Ascending aorta (tissue), 2 donors: ENCODE measurements at regions of chr5 and their contacts with region 1.

Region 1: DNA sequence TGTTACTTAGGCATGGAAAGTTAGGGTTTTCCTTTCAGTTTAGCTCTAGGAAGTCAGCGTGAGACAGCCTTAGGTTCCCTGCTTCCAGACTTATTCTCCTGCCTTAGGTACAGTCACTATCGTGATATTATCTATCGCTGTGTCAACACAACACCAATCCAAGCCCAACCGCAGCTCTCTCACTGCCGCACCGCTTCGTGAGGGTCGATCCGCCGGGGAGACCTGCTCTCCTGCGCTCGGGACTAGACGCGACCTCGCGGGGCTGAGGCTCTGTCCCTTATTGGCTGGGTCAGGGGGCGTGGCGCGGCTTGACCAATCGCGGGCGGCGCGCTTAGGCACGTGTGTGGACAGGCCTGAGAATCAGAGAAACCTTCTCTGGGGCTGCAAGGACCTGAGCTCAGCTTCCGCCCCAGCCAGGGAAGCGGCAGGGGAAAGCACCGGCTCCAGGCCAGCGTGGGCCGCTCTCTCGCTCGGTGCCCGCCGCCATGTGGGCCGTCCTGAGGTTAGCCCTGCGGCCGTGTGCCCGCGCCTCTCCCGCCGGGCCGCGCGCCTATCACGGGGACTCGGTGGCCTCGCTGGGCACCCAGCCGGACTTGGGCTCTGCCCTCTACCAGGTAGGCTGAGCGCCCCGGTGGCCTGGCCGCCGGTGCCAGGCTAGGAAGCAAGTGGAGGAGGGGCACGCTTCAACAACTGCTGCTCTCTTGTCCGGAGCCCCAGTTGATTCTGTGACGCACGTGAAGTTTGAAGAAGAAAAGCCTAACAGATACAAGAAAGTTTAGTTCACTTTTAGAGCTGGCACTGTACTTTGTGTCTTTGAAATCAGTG is at the start of gene MCCC2:
- DNase-seq: peak; percentile 91 to 99
- H3K4me3 ChIP-seq: peak within 1 kb of the TSS; percentile 81 to 84
- H3K27ac ChIP-seq: peak within 1 kb of the TSS; percentile 89 to 92
- H3K4me1 ChIP-seq: peaks cover 0 to 13% of the 10 kb centered on the region in 2 donors
- H3K27me3 ChIP-seq: no peaks in the 10 kb centered on the region
- CTCF ChIP-seq: no peak
- total RNA-seq, gene MCCC2: 13.8 TPM

Region 2: GRCh38 chr5:71455427-71456361 is 131.5 kb before region 1 on chr5 and contains the start of gene BDP1:
- intact Hi-C with region 1: loop called (anchors 2 kb)
- DNase-seq: peak; percentile 87 to 98
- H3K4me3 ChIP-seq: peak within 1 kb of the TSS; percentile 79 to 85
- H3K27ac ChIP-seq: peak within 1 kb of the TSS; percentile 90 to 92
- H3K4me1 ChIP-seq: peaks cover 0 to 9% of the 10 kb centered on the region in 2 donors
- H3K27me3 ChIP-seq: no peaks in the 10 kb centered on the region
- CTCF ChIP-seq: peak in 1 of 3 experiments; percentile 30
- total RNA-seq, gene BDP1: 25.0 TPM

Region 3: GRCh38 chr5:72057816-72058215 is 470.7 kb after region 1 on chr5:
- intact Hi-C with region 1: no loop called
- DNase-seq: no peak
- H3K4me3 ChIP-seq: no peak overlapping the region
- H3K27ac ChIP-seq: no peak overlapping the region
- H3K4me1 ChIP-seq: no peaks in the 10 kb centered on the region
- H3K27me3 ChIP-seq: no peaks in the 10 kb centered on the region
- CTCF ChIP-seq: no peak